Activated CD4-positive, alpha-beta memory T cell treated with anti-CD3 and anti-CD28 coated beads for 36 hours (primary cell): ENCODE measurements at regions of chr14 and their contacts with region 1.

Region 1: DNA sequence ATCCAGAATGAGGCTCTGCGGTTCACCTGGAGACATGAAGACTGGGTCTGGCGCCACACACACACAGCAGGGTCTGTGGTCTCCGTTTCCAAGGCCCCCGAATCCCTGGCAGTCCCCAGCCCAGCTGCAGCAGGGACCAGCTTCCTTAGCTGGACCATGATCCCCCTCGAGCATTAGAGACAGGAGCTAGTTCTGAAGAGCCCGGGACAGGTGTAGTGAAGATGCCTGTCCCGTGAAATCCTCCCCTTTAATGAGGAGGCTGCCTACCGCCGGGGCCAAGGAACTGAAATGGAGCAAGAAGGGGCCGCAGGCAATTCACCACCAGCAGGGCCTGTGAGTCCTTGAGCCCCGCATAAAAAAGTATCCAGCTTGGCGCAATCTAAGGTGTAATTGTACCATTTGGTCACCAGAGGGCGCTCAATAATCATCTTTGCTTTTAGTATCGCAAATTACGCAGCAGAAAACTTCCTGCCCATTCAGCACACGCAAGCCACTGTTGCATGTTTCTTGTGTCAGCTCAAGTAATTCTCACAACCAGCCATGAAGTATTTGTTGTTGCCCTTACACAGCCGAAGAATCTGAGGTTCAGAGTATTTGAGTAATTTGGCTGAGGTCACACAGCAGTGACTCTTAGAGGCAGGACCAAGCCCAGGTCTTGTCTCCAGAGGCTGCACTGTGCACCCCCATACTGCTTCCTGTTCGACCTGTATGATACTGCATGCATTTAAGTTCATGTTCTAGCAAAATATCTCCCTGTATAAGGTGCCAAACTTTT is 54.3 kb upstream of the PPP2R5C start:
- DNase-seq: peak; percentile 65
- H3K4me3 Mint-ChIP-seq: peak overlapping the region; percentile 51
- H3K27ac Mint-ChIP-seq: peak overlapping the region; percentile 84
- H3K4me1 Mint-ChIP-seq: peaks cover 30% of the 10 kb centered on the region
- H3K27me3 Mint-ChIP-seq: no peaks in the 10 kb centered on the region

Region 2: DNA sequence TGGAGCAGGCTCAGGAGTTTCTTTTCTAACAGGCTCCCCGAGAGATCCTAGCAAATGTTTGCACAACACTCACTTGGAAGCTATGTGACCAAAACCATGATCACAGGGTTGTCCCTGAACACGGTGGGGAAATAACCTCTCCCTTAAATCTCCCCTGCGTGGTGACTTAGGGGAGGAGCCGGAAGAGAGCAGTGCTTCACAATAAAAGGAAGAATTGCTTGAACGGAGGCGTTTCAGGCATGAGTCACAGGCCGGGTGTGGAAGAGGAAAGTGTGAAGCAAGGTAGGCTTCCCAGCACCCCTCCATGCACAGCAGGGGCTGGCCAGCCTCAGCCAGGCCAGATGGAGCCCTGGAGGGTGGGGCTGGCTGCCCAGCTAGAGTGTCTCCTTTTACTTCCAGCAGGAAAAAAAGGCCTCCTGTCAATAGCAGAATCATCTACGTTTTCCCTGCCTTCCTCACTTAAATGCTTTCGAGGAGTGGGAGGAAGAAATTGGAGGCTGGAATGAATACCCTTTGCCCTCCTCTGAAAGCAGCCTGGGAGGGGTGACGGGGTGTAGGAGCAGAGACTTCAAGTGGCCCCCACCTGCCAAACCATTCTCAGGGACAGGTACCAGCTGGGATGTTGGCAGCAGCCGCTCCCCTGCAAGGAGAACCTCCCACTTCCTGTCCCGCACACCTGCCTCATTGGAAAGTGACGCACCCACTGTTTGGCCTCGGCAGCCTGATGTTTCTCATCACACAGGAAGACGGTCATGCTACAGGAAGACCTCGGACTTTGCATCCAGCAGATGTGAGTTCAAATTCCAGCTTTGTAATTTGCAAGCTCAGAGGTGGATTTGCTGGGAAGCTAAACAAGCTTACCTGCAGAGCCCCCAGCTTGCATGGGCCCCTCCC is 24.2 kb after region 1 on chr14:
- CTCF ChIA-PET with region 1: interaction called, 21 read pairs
- POLR2A ChIA-PET with region 1: no interaction called
- intact Hi-C with region 1: loop called (anchors 1 kb)
- DNase-seq: peak; percentile 94
- H3K4me3 Mint-ChIP-seq: peak overlapping the region; percentile 74
- H3K27ac Mint-ChIP-seq: peak overlapping the region; percentile 97
- H3K4me1 Mint-ChIP-seq: peaks cover 61% of the 10 kb centered on the region
- H3K27me3 Mint-ChIP-seq: no peaks in the 10 kb centered on the region

Region 3: DNA sequence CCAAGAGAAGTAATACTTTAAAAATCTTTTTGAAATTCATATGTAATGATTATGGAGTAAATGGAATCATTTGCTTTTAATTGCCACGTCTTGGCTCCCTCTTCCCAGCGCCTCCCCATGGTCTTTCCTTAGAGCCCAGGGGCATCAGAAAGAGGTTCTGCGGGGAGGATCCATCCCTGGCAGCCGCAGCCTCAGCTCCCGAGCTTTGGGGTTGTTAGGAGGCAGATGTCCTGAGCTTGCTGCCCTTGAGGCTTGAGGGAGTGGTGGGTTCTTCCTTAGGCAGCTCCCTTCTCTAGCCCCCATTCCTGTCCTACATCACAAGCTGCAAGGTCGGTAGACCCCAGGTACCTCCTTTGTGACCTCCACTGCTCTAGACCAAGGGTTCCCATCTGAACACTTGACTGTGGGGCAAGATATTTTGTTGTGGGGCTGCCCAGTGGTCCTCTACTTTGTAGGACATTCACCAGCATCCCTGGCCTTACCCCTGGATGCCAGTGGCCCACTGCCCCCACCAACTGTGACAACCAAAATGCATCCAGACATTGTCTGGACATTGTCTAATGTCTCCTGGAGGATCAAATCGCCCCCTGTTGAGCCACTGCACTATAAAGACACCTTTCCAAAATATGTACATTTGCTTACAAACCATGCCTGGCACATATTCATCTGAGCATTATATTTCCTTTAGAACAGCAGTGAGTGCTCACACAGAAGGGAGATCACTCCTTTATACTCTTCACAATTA is 60.5 kb after region 1 on chr14:
- CTCF ChIA-PET with region 1: interaction called, 35 read pairs
- POLR2A ChIA-PET with region 1: interaction called, 7 read pairs
- intact Hi-C with region 1: no loop called
- DNase-seq: no peak
- H3K4me3 Mint-ChIP-seq: no peak overlapping the region
- H3K27ac Mint-ChIP-seq: no peak overlapping the region
- H3K4me1 Mint-ChIP-seq: peaks cover 37% of the 10 kb centered on the region
- H3K27me3 Mint-ChIP-seq: no peaks in the 10 kb centered on the region

Region 4: GRCh38 chr14:101876555-101876938 is 169.3 kb after region 1 on chr14:
- CTCF ChIA-PET with region 1: interaction called, 16 read pairs
- POLR2A ChIA-PET with region 1: no interaction called
- intact Hi-C with region 1: loop called (anchors 2 kb)
- DNase-seq: peak; percentile 87
- H3K4me3 Mint-ChIP-seq: peak overlapping the region; percentile 56
- H3K27ac Mint-ChIP-seq: peak overlapping the region; percentile 84
- H3K4me1 Mint-ChIP-seq: peaks cover 91% of the 10 kb centered on the region
- H3K27me3 Mint-ChIP-seq: no peaks in the 10 kb centered on the region

Region 5: GRCh38 chr14:101957406-101958234 is 250.4 kb after region 1 on chr14:
- CTCF ChIA-PET with region 1: interaction called, 20 read pairs
- POLR2A ChIA-PET with region 1: no interaction called
- intact Hi-C with region 1: loop called (anchors 1 kb)
- DNase-seq: no peak
- H3K4me3 Mint-ChIP-seq: no peak overlapping the region
- H3K27ac Mint-ChIP-seq: no peak overlapping the region
- H3K4me1 Mint-ChIP-seq: peaks cover 7% of the 10 kb centered on the region
- H3K27me3 Mint-ChIP-seq: no peaks in the 10 kb centered on the region

Region 6: DNA sequence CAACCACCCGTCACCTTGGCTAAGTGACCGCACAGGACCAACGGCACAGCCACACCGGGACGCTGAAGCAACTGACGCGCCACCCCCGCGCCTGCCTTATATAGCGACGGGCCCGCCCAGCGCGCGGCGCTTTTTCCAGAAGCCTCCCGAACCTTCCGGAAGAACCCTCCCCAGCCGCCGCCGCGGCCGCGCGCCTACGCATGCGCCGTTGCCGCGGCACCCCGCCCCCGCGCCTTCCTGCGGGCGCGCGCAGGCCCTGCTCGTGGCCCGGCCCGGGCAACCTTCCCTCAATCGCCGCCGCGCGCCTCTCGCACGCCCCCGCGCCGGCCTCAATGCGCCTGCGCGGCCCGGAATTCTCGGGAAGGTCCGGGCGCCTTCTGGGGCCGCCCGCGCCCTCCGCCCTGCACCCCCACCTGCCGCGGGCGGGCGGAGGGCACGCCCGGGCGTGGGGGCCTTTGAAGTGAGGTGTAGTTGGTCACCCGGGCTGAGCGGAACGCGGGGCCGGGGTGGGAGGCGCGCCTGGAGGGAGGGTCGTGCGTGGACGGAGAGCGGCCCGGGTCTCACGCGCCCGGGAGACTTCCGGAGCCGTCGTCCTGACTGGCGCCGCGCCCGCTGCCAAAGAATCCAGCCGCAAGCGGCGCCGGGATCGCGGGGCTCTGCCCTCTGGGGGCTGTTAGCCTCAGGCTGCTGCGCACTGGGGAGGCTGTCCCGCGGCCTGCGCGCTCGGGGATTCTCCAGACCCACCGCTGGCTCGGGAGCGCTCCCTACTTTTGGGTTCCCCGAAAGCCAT is 379.9 kb after region 1 on chr14 and contains the start of gene HSP90AA1:
- CTCF ChIA-PET with region 1: interaction called, 3 read pairs
- POLR2A ChIA-PET with region 1: no interaction called
- intact Hi-C with region 1: loop called (anchors 2 kb)
- DNase-seq: peak; percentile 96
- H3K4me3 Mint-ChIP-seq: peak within 1 kb of the TSS; percentile 84
- H3K27ac Mint-ChIP-seq: peak within 1 kb of the TSS; percentile 94
- H3K4me1 Mint-ChIP-seq: peaks cover 43% of the 10 kb centered on the region
- H3K27me3 Mint-ChIP-seq: no peaks in the 10 kb centered on the region
- total RNA-seq, gene HSP90AA1: 1,107 to 1,148 TPM